Heart right ventricle (tissue), 16 donors: ENCODE measurements at regions of chr20 and their contacts with region 1.

Region 1: DNA sequence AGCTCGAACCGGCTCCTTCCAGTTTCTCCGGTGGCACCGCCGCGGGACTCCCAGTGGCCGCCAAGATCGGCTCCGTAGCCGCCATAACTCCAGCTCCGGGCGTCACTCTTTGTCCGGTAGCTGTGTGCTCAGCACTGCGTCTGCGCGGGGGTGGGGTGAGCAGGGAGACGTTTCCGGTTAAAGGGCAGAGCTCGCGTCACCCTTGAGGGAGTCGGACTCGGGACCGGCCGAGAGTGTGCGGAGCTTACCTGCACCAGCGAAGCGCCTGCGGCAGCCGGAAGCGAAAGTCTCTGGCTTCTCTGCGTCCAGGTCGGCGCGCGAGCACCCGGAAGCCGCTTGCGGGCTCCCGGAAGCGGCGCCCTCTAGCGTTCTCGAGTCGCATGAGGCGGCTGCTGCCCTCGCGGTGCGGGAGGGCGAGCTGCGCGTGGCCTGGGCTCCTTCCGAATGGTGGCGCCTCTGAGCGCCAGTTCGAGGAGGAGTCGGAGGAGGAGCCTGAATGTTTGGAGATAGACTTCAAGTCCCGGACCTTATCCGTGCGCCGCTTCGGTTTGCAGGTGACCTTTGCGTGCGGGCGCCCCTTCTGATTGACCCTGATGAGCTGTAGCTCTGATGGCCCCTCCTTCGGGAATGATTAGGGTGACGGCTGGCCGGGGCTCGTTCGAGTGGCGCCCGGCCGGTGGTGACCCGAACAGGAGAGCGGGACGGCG is at the start of gene SCAND1:
- DNase-seq: peak; percentile 93 to 96
- ATAC-seq: peak; percentile 92 to 97 (median 95)
- H3K4me3 ChIP-seq: peak within 1 kb of the TSS; percentile 67 to 98 (median 88)
- H3K27ac ChIP-seq: peak within 1 kb of the TSS; percentile 91 to 99 (median 98)
- H3K4me1 ChIP-seq: peaks cover 10 to 33% (median 28%) of the 10 kb centered on the region in 9 donors
- H3K27me3 ChIP-seq: no peaks in the 10 kb centered on the region
- CTCF ChIP-seq: peak; percentile 95 to 100 (median 98)
- total RNA-seq, gene SCAND1: 29.9 to 55.8 (median 39.9) TPM

Region 2: DNA sequence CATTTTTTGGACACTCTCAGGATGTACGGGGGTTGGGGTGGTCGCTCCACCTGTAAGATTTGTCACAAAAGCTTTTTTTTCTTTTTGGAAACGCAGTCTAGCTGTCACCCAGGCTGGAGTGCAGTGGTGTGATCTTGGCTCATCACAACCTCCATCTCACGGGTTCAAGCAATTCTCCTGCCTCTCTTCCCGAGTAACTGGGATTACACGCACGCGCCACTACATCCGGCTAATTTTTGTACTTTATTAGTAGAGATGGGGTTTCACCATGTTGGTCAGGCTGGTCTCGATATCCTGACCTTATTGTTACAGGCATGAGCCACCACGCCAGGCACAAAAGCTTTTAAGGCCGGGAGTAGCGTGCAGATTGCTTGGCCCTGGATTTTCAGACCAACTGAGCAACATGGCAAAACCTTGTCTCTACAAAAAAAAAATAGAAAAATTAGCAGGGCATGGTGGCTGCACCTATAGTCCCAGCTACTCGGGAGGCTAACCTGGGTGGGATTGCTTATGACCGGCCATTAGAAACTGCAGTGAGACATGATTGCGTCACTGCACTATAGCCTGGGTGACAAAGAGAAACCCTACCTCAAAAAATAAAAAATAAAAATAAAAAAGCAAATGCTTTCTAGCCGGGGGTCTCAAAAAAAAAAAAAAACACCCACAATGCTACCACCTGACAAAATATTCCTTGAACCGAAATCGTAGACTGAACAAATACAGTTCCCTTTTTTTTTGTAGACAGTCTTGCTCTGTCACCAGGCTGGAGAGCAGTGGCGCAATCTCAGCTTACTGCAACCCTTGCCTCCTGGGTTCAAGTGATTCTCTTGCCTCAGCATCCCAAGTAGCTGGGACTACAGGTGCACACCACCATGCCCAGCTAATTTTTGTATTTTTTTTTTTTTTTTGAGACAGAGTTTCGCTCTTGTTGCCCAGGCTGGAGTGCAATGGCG is 227.3 kb before region 1 on chr20:
- intact Hi-C with region 1: loop called in 1 of 10 experiments (anchors 10 kb)
- DNase-seq: no peak
- ATAC-seq: no peak
- H3K4me3 ChIP-seq: no peak overlapping the region
- H3K27ac ChIP-seq: no peak overlapping the region
- H3K4me1 ChIP-seq: peaks cover 3 to 57% (median 40%) of the 10 kb centered on the region in 9 donors
- H3K27me3 ChIP-seq: no peaks in the 10 kb centered on the region
- CTCF ChIP-seq: no peak

Region 3: GRCh38 chr20:35883778-35884540 is 70.4 kb before region 1 on chr20:
- intact Hi-C with region 1: no loop called
- DNase-seq: peak; percentile 59 to 70
- ATAC-seq: peak; percentile 81 to 91 (median 84)
- H3K4me3 ChIP-seq: no peak overlapping the region
- H3K27ac ChIP-seq: peak overlapping the region in 5 of 10 donors; percentile 1 to 61 (median 10)
- H3K4me1 ChIP-seq: peaks cover 0 to 32% (median 14%) of the 10 kb centered on the region in 9 donors
- H3K27me3 ChIP-seq: no peaks in the 10 kb centered on the region
- CTCF ChIP-seq: peak; percentile 42 to 82 (median 74)